ENCODE measurements at regions of chr21 and their contacts with region 1.

Region 1: DNA sequence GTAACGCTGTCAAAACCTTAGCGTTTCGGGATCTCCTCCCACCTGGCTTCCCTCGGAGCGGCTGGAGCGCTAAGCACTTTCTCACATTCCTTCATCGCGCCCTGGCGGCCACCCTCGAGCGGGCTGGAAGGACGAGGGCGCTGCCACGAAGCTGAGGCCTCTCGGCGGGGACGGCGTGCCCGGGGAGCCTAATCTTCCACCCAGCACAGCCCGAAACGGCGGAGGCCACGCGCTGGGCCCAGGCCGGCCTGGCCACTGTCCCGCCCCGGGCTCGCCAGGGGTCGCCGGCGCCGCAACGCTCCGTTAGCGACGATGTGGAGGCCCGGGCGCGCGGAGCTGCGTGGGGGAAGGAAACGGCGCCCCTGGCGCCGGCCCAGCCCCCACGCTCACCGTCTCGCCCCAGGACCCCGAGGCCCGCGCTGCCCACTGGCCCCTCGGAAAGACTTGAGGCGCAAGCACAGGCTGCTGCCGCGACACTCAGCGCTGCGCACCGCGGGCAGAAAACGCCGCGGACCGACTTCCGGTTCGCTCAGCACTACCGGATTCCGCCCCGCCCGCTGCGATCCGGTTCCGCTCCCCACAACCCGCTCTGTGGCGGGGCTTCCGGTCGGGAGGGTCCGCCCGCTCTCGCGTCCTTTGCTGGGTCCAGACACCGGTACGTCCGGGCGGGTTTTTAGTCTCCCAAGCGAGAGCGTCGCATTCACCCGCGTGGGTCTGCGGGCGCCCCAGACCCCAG is at the start of gene YBEY:
- DNase-seq: peak; percentile 97
- H3K4me3 Mint-ChIP-seq: peak within 1 kb of the TSS; percentile 92
- H3K27ac Mint-ChIP-seq: peak within 1 kb of the TSS; percentile 98
- H3K4me1 Mint-ChIP-seq: peaks cover 43% of the 10 kb centered on the region
- H3K27me3 Mint-ChIP-seq: no peaks in the 10 kb centered on the region
- total RNA-seq, gene YBEY: 16.2 and 18.2 TPM in 2 replicates

Region 2: GRCh38 chr21:46144464-46145070 is 141.4 kb before region 1 on chr21:
- intact Hi-C with region 1: loop called (anchors 1 kb)
- DNase-seq: no peak
- H3K4me3 Mint-ChIP-seq: peak overlapping the region; percentile 26
- H3K27ac Mint-ChIP-seq: peak overlapping the region; percentile 84
- H3K4me1 Mint-ChIP-seq: peaks cover 11% of the 10 kb centered on the region
- H3K27me3 Mint-ChIP-seq: no peaks in the 10 kb centered on the region

Region 3: DNA sequence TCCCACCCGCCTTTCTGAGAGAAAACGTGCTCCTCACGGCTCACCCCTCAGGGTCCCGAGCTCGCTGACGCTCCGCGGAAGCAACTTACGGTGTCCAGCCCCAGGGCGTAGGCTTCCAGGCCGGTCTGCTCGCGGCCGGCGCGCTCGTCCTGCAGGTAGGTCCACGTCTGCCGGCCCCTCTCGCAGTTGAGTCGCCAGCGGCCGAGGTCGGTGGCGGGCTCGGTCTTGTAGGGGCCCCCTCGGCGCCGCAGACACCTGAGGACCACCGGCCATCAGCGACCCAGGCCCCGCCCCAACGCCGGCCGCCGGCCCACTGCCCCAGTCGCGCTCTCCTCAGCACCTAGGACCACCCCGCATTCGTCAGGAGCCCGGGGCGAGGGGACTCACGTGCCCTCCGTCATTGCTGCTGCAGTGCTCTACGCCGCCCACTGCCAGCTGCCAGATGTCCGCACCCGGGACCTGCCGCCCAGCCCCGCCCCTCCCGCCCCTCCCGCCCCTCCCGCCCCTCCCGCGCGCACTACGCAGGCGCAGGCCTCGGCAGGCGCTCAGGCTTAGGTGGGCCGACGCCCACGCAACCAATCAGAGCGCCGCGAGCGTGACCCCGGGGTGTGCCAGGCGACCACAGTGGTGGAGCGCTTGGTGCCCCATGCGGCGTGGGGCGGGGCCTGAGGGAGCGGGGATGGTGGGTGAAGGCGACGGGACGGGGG is 57.4 kb before region 1 on chr21 and contains the start of gene LSS:
- intact Hi-C with region 1: no loop called
- DNase-seq: peak; percentile 99
- H3K4me3 Mint-ChIP-seq: peak within 1 kb of the TSS; percentile 94
- H3K27ac Mint-ChIP-seq: peak within 1 kb of the TSS; percentile 100
- H3K4me1 Mint-ChIP-seq: peaks cover 51% of the 10 kb centered on the region
- H3K27me3 Mint-ChIP-seq: no peaks in the 10 kb centered on the region
- total RNA-seq, gene LSS: 19.7 and 23.1 TPM in 2 replicates

Region 4: DNA sequence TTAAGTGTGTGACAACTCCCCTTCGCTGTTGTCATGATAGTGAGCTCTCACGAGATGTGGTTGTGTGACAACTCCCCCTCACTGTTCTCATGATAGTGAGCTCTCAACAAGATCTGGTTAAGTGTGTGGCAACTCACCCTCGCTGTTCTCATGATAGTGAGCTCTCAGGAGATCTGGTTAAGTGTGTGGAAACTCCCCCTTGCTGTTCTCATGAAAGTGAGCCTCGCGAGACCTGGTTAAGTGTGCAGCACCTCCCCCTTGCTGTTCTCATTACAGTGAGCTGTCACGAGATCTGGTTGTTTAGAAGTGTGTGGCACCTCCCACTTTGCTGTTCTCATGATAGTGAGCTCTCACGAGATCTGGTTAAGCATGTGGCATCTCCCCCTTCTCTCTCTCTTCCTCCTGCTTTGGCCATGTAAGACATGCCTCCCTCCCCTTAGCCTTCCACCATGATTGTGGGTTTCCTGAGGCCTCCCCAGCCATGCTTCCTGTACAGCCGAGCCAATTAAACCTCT is 32.3 kb before region 1 on chr21:
- intact Hi-C with region 1: loop called (anchors 1 kb)
- DNase-seq: peak; percentile 89
- H3K4me3 Mint-ChIP-seq: peak overlapping the region; percentile 61
- H3K27ac Mint-ChIP-seq: peak overlapping the region; percentile 91
- H3K4me1 Mint-ChIP-seq: peaks cover 29% of the 10 kb centered on the region
- H3K27me3 Mint-ChIP-seq: no peaks in the 10 kb centered on the region

Region 5: DNA sequence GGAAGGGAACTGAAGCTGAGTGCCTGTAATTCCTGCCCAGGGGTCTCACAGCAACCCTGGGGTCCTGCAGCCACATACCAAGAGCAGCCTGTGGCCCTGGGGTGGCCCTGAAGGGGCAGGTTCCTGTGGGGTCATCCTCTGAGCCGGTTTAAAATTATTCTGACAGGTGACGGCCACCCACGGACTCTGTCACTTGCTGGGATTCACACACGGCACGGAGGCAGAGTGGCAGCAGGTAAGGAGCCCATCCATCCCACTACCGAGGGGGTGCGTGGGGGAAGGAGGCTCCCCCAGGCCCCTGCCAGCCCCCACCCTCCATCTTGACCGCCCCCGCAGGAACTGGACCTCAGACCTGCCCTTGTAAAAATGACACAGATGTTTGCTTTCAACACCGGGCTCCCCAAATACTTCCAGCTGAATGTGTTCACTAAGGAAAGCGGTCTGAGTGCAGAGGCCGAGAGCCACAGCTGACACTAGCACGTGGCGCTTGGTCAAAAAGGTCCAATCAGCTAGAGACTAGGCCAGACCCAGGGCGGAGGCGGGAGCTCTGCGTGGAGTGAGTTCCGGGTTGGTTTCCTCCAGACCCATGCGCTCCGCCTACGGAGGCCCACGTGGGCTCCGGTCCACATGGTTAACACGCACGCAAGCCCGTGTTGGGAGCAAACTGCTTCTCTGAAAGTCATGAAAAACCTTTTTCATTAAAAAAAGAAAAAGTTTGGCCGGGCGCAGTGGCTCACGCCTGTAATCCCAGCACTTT is 10.2 kb after region 1 on chr21:
- intact Hi-C with region 1: loop called (anchors 1 kb)
- DNase-seq: peak; percentile 89
- H3K4me3 Mint-ChIP-seq: peak overlapping the region; percentile 63
- H3K27ac Mint-ChIP-seq: peak overlapping the region; percentile 78
- H3K4me1 Mint-ChIP-seq: peaks cover 17% of the 10 kb centered on the region
- H3K27me3 Mint-ChIP-seq: no peaks in the 10 kb centered on the region

Region 6: DNA sequence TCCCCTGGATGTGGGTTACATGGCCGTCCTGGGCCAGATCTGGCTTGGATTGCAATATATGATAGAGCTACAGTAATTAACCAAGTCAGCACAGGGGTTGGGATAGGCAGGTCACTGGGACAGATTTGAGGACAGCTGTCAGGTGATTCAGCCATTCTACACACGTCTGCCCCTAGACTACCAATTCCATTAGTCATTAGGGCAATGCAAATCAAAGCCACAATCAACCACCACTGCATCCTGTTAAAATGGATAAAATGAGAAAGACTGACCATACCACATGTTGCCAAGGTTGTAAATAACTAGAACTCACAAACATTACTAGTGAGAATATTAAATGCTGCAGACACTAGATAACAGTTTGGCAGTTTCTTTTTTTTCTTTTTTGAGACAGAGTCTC is 21.7 kb after region 1 on chr21:
- intact Hi-C with region 1: no loop called
- DNase-seq: no peak
- H3K4me3 Mint-ChIP-seq: no peak overlapping the region
- H3K27ac Mint-ChIP-seq: no peak overlapping the region
- H3K4me1 Mint-ChIP-seq: no peaks in the 10 kb centered on the region
- H3K27me3 Mint-ChIP-seq: no peaks in the 10 kb centered on the region

Region 7: DNA sequence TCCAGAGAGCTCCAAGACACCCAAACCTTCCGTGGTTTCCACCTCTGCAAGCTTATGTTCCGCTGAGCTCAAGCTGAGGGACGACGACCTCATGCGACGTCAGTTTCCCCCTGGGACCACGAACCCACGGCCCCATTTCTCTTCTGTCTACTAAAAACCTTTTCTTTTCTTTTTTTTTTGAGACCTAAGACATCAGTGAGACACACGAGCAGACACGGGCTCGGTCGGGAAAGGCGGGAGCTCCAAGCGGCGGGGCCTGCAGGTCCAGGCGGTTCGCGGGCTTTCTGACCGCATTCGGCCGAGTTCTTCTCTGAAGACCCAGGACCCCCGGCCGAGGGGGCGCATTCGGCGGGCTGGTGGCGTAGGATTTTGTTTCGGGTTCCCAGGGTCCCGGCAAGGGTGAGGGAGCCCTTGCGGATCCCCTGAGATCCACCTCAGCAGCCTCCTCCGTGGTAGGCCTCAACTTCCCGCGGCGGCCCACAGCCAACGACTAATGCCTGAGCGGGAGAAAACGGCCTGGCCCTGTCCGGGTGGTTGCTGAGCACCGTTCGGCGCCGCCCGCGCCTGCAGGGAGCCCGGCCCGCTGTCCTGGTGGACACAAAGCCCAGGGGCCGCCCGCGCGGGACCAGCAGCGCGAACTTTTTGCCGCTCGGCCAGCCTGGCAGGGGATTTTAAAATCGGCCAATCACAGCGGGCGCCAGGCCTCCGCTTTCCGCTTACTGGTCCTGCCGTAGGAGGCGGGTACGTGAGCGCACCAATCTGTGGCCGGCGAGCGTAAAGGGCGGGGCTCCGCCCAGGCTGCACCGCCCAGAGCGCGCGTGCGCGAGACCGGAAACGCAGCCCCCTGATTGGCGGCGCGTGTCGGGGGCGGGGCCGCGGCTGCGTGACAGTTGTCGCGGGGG is 37.5 kb after region 1 on chr21 and contains the start of gene C21orf58:
- intact Hi-C with region 1: loop called (anchors 2 kb)
- DNase-seq: peak; percentile 100
- H3K4me3 Mint-ChIP-seq: peak within 1 kb of the TSS; percentile 97
- H3K27ac Mint-ChIP-seq: peak within 1 kb of the TSS; percentile 99
- H3K4me1 Mint-ChIP-seq: peaks cover 32% of the 10 kb centered on the region
- H3K27me3 Mint-ChIP-seq: no peaks in the 10 kb centered on the region
- total RNA-seq, gene C21orf58: 28.4 and 33.4 TPM in 2 replicates

Region 8: GRCh38 chr21:46458315-46459023 is 172.5 kb after region 1 on chr21 and contains the start of gene DIP2A:
- intact Hi-C with region 1: loop called (anchors 1 kb)
- DNase-seq: peak; percentile 98
- H3K4me3 Mint-ChIP-seq: peak within 1 kb of the TSS; percentile 93
- H3K27ac Mint-ChIP-seq: peak within 1 kb of the TSS; percentile 96
- H3K4me1 Mint-ChIP-seq: peaks cover 37% of the 10 kb centered on the region
- H3K27me3 Mint-ChIP-seq: no peaks in the 10 kb centered on the region
- total RNA-seq, gene DIP2A: 30.5 and 31.3 TPM in 2 replicates